ENCODE measurements at regions of chr3 and their contacts with region 1.

Region 1: DNA sequence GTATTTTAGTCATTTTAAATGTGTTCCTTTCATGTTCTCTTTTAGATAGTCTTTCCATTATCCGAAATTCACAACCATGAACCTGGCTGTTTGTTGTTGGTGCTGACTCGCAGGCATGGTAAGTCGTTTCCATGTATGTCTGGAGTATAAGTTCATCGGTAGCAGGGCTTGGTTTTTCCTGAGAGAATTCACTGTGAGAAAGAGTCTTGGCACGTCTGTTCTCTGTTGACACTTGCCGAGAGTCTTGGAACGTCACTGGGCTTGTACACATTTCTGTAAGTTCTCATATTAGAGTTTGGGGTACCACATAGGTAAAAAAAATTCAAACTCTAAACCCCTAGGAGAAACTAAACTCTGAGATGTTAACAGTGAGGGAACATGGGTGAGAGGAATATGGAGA is 29.4 kb upstream of the EIF4A2 start:
- DNase-seq: no peak
- ATAC-seq: no peak
- H3K4me3 ChIP-seq: no peak overlapping the region
- H3K27ac ChIP-seq: no peak overlapping the region
- H3K4me1 ChIP-seq: peaks cover 7% of the 10 kb centered on the region
- H3K27me3 ChIP-seq: no peaks in the 10 kb centered on the region
- CTCF ChIP-seq: no peak
- EP300 ChIP-seq: no peak
- POLR2A ChIP-seq: no peak
- RAD21 ChIP-seq: no peak

Region 2: GRCh38 chr3:186589121-186589520 is 164.9 kb before region 1 on chr3:
- CTCF ChIA-PET with region 1: no interaction called
- POLR2A ChIA-PET with region 1: no interaction called
- in situ Hi-C with region 1: no loop called
- intact Hi-C with region 1: loop called (anchors 1 kb)
- DNase-seq: peak; percentile 60
- ATAC-seq: peak; percentile 42
- H3K4me3 ChIP-seq: no peak overlapping the region; a peak in 1 of 6 replicates
- H3K27ac ChIP-seq: peak overlapping the region; percentile 66
- H3K4me1 ChIP-seq: peaks cover 59% of the 10 kb centered on the region
- H3K27me3 ChIP-seq: no peaks in the 10 kb centered on the region
- CTCF ChIP-seq: peak; percentile 66
- EP300 ChIP-seq: no peak
- POLR2A ChIP-seq: no peak
- RAD21 ChIP-seq: peak; percentile 42; the same call in 1 of the 2 replicates

Region 3: DNA sequence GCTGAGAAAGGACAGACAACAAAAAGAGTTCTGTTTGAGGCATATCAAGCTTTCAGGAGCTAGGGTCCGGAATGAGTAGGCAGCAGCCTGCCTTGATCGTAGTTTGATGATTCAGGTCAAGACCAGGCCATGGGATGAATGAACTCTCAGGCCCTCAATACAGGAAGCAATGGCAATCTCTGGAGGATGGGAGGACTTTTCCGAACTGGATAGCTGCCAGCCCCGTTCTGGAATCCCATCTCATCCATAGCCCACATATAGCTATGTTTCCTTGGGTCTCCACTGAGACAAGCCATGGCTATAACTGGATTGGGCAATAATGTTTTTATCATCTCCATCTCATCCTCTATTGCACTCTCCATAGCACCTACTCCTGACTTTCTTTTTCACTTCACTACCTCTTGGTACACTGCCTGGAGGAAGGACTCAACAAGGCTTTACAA is 128.4 kb before region 1 on chr3:
- CTCF ChIA-PET with region 1: no interaction called
- POLR2A ChIA-PET with region 1: interaction called, 3 read pairs
- in situ Hi-C with region 1: no loop called
- intact Hi-C with region 1: loop called (anchors 2 kb)
- DNase-seq: no peak
- ATAC-seq: peak; percentile 8
- H3K4me3 ChIP-seq: no peak overlapping the region
- H3K27ac ChIP-seq: no peak overlapping the region
- H3K4me1 ChIP-seq: peaks cover 15% of the 10 kb centered on the region
- H3K27me3 ChIP-seq: no peaks in the 10 kb centered on the region
- CTCF ChIP-seq: no peak
- EP300 ChIP-seq: no peak
- POLR2A ChIP-seq: peak; percentile 55 to 78
- RAD21 ChIP-seq: no peak

Region 4: GRCh38 chr3:186732169-186732766 is 21.7 kb before region 1 on chr3:
- CTCF ChIA-PET with region 1: no interaction called
- POLR2A ChIA-PET with region 1: no interaction called
- in situ Hi-C with region 1: no loop called
- intact Hi-C with region 1: no loop called
- DNase-seq: no peak
- ATAC-seq: no peak
- H3K4me3 ChIP-seq: no peak overlapping the region
- H3K27ac ChIP-seq: no peak overlapping the region
- H3K4me1 ChIP-seq: no peaks in the 10 kb centered on the region
- H3K27me3 ChIP-seq: no peaks in the 10 kb centered on the region
- CTCF ChIP-seq: no peak
- EP300 ChIP-seq: no peak
- POLR2A ChIP-seq: no peak
- RAD21 ChIP-seq: no peak

Region 5: DNA sequence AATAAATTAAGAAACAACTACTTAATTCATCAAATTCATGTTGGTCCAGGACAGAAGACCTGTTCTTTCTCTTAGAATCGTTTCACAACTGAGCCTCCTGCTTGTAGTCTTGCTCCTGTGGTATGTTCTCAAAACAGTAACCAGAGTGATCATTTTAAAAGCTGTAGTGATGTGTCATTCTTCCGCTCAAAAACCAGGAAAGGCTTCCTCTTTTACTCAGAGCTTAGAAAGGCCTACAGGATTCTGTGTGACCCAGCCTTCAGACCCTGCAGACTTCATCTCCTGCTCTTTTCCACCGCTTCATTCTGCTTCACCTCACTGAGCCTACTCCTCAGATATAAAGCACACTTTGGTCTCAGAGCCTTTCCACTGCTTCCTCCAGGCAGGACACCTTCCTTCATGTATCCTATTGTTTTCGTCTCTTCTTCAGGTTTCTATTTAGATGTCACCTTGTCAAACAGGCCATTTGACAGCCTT is 199.0 kb after region 1 on chr3:
- CTCF ChIA-PET with region 1: no interaction called
- POLR2A ChIA-PET with region 1: no interaction called
- in situ Hi-C with region 1: no loop called
- intact Hi-C with region 1: no loop called
- DNase-seq: no peak
- ATAC-seq: no peak
- H3K4me3 ChIP-seq: no peak overlapping the region
- H3K27ac ChIP-seq: no peak overlapping the region
- H3K4me1 ChIP-seq: no peaks in the 10 kb centered on the region
- H3K27me3 ChIP-seq: no peaks in the 10 kb centered on the region
- CTCF ChIP-seq: no peak
- EP300 ChIP-seq: no peak
- POLR2A ChIP-seq: no peak
- RAD21 ChIP-seq: no peak

Measured in HepG2 (cell line).